Posterior vena cava (tissue), 2 donors: ENCODE measurements at regions of chr17 and their contacts with region 1.

Region 1: DNA sequence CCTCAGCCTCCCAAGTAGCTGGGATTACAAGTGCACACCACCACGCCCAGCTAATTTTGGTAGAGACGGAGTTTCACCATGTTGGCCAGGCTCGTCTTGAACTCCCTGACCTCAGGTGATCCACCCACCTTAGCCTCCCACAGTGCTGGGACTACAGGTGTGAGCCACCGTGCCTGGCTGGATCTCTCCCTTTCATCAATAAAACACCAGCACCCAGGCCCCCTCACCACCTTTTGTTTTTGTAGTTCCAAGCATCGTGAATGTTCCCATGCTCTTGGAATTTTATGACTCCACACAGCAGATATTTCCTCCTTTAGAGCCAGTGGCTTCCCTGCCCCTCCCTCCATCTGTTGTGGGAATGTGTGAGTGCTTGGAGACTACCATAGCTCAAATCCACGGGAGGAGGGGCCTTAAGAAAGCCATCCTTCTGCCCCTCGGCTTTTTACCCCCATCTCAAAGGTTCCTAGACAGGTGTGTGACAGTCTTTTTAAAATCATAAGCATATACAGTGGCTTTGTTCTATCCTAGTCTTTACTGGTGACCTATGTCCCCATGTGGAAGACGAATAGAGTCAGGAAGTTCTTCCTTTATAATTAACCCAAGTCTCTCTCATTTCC is 47.1 kb downstream of the YPEL2 start:
- DNase-seq: no peak

Region 2: GRCh38 chr17:59296771-59297500 is 81.6 kb before region 1 on chr17:
- intact Hi-C with region 1: no loop called
- DNase-seq: no peak

Region 3: DNA sequence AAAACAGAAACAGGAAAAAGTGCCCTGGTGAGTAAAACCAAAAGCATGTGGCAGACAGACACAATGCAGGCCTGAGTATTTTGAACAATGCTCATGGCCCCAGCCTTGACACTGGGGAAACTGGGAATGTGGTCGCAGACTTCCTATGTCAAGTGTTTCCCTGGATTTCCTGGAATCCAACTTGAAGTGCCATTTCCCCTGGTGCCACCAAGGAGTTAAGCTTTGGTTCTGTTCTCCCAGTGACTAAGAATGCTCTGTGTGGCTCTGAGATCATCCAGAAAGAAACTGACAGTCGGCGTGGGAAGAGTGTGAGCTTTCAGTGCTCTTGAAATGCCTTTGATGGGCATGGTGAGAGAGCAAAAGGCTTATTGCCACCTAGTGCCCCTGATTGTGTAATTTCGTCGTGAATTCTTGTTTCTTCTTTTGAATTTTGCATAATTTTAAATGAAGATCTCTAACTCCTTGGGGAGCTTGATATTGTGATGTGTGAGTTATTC is 48.9 kb after region 1 on chr17:
- intact Hi-C with region 1: loop called in 1 of 2 experiments (anchors 5 kb)
- DNase-seq: no peak

Region 4: DNA sequence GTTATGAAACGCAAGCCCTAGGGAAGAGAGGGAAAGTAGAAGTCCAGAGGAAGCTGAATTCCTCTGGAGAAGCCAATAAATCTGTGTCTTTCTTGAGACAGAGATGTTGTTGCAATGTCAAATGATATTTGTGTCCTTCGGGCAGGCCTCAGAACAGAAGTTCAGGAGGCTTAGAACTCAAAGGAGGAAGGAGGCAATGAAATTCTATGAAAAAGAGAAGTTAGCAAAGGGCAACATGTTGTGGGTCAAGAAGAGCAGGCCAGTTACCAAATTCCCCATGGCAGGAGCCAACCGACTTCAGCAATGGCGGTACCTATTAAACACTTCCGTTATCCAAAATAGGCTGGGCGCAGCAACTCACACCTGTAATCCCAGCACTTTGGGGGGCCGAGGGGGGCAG is 77.9 kb after region 1 on chr17:
- intact Hi-C with region 1: no loop called
- DNase-seq: no peak